Ascending aorta (tissue), 2 donors: ENCODE measurements at regions of chr9 and their contacts with region 1.

Region 1: DNA sequence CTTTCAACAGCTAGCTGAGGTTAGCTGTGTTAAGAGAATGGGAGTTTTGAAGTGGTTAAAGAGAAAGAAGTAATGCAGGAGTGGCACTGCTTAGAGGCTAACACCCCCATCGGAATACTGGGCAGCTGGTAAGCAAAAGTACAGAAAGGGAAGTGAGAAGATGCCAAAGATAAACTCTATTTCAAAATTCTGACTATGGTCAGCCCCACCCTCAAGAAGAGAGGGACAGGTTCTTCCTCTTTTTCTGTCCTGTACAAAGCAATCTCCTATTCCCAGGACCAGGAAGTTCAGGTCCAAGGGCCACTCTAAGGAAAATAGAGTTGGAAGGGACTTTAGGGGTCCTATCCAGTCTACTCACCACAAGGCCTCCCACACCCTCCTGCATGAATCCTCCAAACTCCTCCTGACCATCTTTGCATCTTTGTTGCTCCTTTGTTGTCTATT is 45.9 kb upstream of the JAK2 start:
- DNase-seq: no peak
- H3K4me3 ChIP-seq: no peak overlapping the region
- H3K27ac ChIP-seq: peak overlapping the region; percentile 61 to 65
- H3K4me1 ChIP-seq: peaks cover 4 to 36% of the 10 kb centered on the region in 2 donors
- H3K27me3 ChIP-seq: no peaks in the 10 kb centered on the region
- CTCF ChIP-seq: no peak

Region 2: GRCh38 chr9:4814913-4815312 is 124.2 kb before region 1 on chr9:
- intact Hi-C with region 1: no loop called
- DNase-seq: no peak
- H3K4me3 ChIP-seq: no peak overlapping the region
- H3K27ac ChIP-seq: no peak overlapping the region
- H3K4me1 ChIP-seq: no peaks in the 10 kb centered on the region
- H3K27me3 ChIP-seq: no peaks in the 10 kb centered on the region
- CTCF ChIP-seq: no peak

Region 3: GRCh38 chr9:4904322-4905134 is 34.6 kb before region 1 on chr9:
- intact Hi-C with region 1: loop called (anchors 5 kb)
- DNase-seq: no peak
- H3K4me3 ChIP-seq: no peak overlapping the region
- H3K27ac ChIP-seq: peak overlapping the region; percentile 31 to 41
- H3K4me1 ChIP-seq: peaks cover 4 to 13% of the 10 kb centered on the region in 2 donors
- H3K27me3 ChIP-seq: no peaks in the 10 kb centered on the region
- CTCF ChIP-seq: no peak

Region 4: GRCh38 chr9:5015934-5016333 is 76.8 kb after region 1 on chr9:
- intact Hi-C with region 1: no loop called
- DNase-seq: no peak
- H3K4me3 ChIP-seq: no peak overlapping the region
- H3K27ac ChIP-seq: peak overlapping the region; percentile 53 to 67
- H3K4me1 ChIP-seq: peaks cover 5 to 23% of the 10 kb centered on the region in 2 donors
- H3K27me3 ChIP-seq: no peaks in the 10 kb centered on the region
- CTCF ChIP-seq: no peak